Heart left ventricle (tissue), 16 donors: ENCODE measurements at regions of chr10 and their contacts with region 1.

Region 1: DNA sequence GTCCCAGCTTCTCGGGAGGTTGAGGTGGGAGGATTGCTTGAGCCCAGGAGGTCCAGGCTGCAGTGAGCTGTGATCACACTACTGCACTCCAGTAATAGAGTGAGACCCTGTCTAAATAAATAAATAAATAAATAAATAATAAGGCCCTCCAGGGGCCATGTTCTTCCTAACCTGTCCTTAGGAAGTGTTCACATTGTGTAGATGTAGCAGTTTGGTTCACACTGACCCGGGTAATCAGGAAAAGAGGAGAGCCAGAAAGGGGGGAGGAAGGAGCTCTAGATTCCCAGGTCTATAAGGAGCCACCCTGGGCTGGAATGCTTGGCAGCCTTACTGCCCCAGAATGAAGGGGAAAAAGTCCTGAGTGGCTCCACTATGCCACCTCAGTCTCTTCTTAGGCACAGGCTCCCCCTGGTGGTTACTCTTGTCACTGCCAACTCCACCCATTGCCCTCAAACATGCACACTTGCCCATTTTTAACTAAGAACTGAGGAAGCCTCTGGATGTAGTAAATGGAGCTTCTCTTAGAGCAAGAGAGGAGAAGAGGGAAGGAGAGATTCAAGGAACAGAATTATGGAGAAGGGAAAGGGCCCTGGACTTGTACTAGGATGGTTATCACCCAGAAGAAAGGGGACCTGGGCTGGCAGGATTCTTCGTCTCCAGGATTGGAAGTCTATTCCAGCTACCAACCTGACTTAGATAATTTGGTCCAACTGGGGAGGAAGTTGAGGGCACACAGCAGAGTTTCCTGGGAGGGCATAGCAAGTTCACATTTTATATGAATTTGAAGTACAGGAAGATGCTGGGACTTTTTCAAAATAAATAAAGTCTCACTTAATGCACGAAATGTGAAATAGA is 7.8 kb downstream of the HPS6 start:
- DNase-seq: peak; percentile 66 to 82 (median 72)
- ATAC-seq: peak; percentile 62 to 90 (median 78)
- H3K4me3 ChIP-seq: no peak overlapping the region
- H3K27ac ChIP-seq: no peak overlapping the region
- H3K4me1 ChIP-seq: peaks cover 0 to 20% (median 8%) of the 10 kb centered on the region in 12 donors
- H3K27me3 ChIP-seq: no peaks in the 10 kb centered on the region
- CTCF ChIP-seq: peak; percentile 79 to 96 (median 92)
- POLR2A ChIP-seq: no peak

Region 2: DNA sequence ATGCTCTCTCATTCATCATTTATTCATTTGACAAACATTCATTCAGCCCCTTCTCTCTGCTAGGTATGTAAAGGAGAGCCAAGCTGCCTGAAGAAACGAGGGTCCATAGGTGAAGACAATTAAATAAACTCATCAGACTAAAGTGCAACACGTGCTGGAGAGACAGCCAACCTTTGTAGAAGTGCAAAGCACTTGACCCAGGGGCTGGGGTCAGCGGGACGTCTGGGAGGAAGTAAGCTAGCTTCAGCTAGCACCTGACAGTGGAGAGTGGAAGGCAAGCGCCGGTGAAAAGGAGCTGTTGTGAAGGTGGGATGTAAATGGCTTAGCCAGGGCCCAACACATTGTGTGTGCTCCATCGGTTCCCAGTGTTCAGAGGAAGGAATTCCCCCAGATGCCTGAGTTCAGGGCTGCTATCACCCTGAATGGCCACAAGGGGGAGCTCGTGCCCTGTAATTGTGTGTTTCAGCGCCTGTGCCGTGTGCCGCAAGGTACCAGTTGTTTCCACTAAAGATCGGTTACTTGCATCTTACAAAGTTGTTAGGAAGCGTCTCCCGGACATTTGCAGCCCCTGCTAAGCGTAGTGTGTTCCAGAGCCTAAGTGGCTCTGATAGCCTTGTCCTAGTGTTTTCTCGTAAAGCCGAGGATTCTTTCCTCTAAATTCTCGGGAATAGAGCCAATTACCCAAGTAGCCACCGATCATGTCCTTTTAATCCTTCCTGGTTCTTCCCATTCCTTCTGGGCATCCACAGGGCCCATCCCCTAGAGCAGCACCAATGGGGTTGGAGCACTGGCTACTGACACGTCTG is 911.2 kb before region 1 on chr10:
- intact Hi-C with region 1: loop called in 1 of 10 experiments (anchors 10 kb)
- DNase-seq: peak; percentile 58 to 71 (median 68)
- ATAC-seq: peak; percentile 69 to 93 (median 90)
- H3K4me3 ChIP-seq: peak overlapping the region in 8 of 12 donors; percentile 5 to 42 (median 34)
- H3K27ac ChIP-seq: no peak overlapping the region
- H3K4me1 ChIP-seq: peaks cover 0 to 8% (median 2%) of the 10 kb centered on the region in 12 donors
- H3K27me3 ChIP-seq: peaks cover under 1 to 83% (median 27%) of the 10 kb centered on the region in 9 donors
- CTCF ChIP-seq: peak; percentile 93 to 99 (median 96)
- POLR2A ChIP-seq: no peak

Region 3: DNA sequence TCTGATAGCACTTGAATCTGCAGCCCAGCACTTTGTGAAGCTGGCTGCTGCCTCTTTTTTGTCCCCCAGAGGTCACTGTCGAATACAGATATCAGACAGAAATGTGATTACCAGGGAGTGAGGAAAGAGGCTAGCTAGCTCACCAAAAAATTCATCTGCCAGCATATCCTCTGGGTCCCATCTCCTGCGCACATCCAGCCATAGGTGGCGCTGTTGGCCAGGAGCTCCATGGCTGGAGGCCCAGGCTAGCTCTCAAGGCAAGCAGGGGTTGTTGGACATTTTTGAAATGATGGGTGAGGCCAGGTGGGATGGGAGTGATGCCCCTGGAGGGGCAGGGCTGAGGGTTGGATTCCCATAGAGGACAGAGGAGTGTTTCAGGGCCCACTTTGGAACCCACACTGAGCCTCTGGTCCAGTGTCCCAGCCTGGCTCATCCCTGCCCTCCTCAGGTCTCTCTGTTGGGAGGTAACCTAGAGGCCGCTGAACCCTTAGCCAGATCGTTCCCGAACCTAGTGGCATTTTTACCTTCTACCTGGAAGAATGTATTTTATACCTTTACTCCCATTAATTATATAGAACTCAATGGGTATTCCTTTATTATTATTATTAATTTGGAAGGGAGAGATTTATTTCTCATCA is 470.0 kb before region 1 on chr10:
- intact Hi-C with region 1: loop called in 2 of 10 experiments (anchors 10 kb)
- DNase-seq: peak; percentile 37 to 78 (median 63)
- ATAC-seq: peak; percentile 69 to 89 (median 82)
- H3K4me3 ChIP-seq: no peak overlapping the region
- H3K27ac ChIP-seq: no peak overlapping the region
- H3K4me1 ChIP-seq: peaks cover 0 to 16% (median 4%) of the 10 kb centered on the region in 12 donors
- H3K27me3 ChIP-seq: no peaks in the 10 kb centered on the region
- CTCF ChIP-seq: peak; percentile 69 to 94 (median 83)
- POLR2A ChIP-seq: no peak

Region 4: GRCh38 chr10:101840741-101841453 is 232.0 kb before region 1 on chr10:
- intact Hi-C with region 1: loop called in 3 of 10 experiments (anchors 2 to 5 kb)
- DNase-seq: peak; percentile 79 to 89 (median 83)
- ATAC-seq: peak; percentile 70 to 88 (median 85)
- H3K4me3 ChIP-seq: peak overlapping the region; percentile 1 to 59 (median 46)
- H3K27ac ChIP-seq: peak overlapping the region in 2 of 12 donors; percentile 22 to 50
- H3K4me1 ChIP-seq: peaks cover 0 to 75% (median 29%) of the 10 kb centered on the region in 12 donors
- H3K27me3 ChIP-seq: no peaks in the 10 kb centered on the region
- CTCF ChIP-seq: peak; percentile 86 to 96 (median 91)
- POLR2A ChIP-seq: no peak

Region 5: GRCh38 chr10:102114861-102115618 is 42.1 kb after region 1 on chr10:
- intact Hi-C with region 1: loop called in 7 of 10 experiments (anchors 5 kb)
- DNase-seq: peak; percentile 92 to 94 (median 93)
- ATAC-seq: peak; percentile 70 to 84 (median 81)
- H3K4me3 ChIP-seq: peak overlapping the region; percentile 54 to 90 (median 73)
- H3K27ac ChIP-seq: peak overlapping the region; percentile 75 to 99 (median 95)
- H3K4me1 ChIP-seq: peaks cover 4 to 72% (median 63%) of the 10 kb centered on the region in 12 donors
- H3K27me3 ChIP-seq: no peaks in the 10 kb centered on the region
- CTCF ChIP-seq: no peak
- POLR2A ChIP-seq: peak in 1 of 2 donors; percentile 54

Region 6: DNA sequence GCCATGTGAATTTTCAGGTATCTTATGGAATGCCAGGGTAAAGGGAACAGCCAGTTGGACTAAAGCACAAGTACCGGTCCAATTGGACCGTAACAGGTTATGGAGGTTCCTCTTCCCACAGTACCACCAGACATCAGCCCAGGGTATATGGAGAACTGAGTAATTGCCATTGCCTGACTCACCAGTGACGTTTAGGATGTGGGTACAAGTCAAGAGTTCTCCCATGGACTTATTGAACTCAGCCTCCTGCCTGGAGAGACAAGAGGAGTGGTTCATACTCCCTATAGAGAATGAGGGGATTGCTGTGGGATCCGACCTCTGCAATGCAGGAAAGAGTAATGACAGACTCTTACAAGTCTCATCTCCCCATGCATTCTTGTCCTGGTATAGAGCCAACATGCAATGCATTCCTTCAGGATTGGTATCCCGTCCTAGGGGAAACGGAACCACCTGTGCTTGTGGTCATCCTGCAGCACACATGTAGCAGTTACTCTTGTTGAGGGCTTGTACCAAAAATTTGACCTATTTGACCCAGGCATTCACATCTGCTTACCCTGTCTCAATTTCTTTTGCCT is 122.5 kb after region 1 on chr10:
- intact Hi-C with region 1: no loop called
- DNase-seq: no peak
- ATAC-seq: no peak
- H3K4me3 ChIP-seq: no peak overlapping the region
- H3K27ac ChIP-seq: no peak overlapping the region
- H3K4me1 ChIP-seq: no peaks in the 10 kb centered on the region
- H3K27me3 ChIP-seq: no peaks in the 10 kb centered on the region
- CTCF ChIP-seq: no peak
- POLR2A ChIP-seq: no peak